ENCODE measurements at regions of chr5 and their contacts with region 1.

Region 1: GRCh38 chr5:102069974-102070373 is 226.1 kb downstream of the SLCO4C1 start:
- DNase-seq: no peak
- H3K4me3 ChIP-seq: no peak overlapping the region
- H3K27ac ChIP-seq: no peak overlapping the region
- H3K4me1 ChIP-seq: no peaks in the 10 kb centered on the region
- H3K27me3 ChIP-seq: peaks cover 5% of the 10 kb centered on the region
- CTCF ChIP-seq: no peak

Region 2: GRCh38 chr5:102119252-102119651 is 49.3 kb after region 1 on chr5:
- CTCF ChIA-PET with region 1: no interaction called
- POLR2A ChIA-PET with region 1: no interaction called
- intact Hi-C with region 1: loop called (anchors 10 kb)
- DNase-seq: no peak
- H3K4me3 ChIP-seq: no peak overlapping the region
- H3K27ac ChIP-seq: no peak overlapping the region
- H3K4me1 ChIP-seq: no peaks in the 10 kb centered on the region
- H3K27me3 ChIP-seq: peaks cover 27% of the 10 kb centered on the region
- CTCF ChIP-seq: no peak

Measured in A673 (cell line).